Panc1 (cell line): ENCODE measurements at regions of chr7 and their contacts with region 1.

Region 1: GRCh38 chr7:98705626-98706025 is 88.5 kb downstream of the NPTX2 start:
- DNase-seq: no peak
- ATAC-seq: no peak
- H3K4me3 ChIP-seq: no peak overlapping the region
- H3K27ac ChIP-seq: no peak overlapping the region
- H3K4me1 ChIP-seq: no peaks in the 10 kb centered on the region
- H3K27me3 ChIP-seq: no peaks in the 10 kb centered on the region
- CTCF ChIP-seq: no peak

Region 2: GRCh38 chr7:98671733-98672331 is 33.8 kb before region 1 on chr7:
- CTCF ChIA-PET with region 1: no interaction called
- POLR2A ChIA-PET with region 1: interaction called, 10 read pairs
- in situ Hi-C with region 1: no loop called
- intact Hi-C with region 1: no loop called
- DNase-seq: no peak
- ATAC-seq: no peak
- H3K4me3 ChIP-seq: no peak overlapping the region
- H3K27ac ChIP-seq: no peak overlapping the region
- H3K4me1 ChIP-seq: no peaks in the 10 kb centered on the region
- H3K27me3 ChIP-seq: no peaks in the 10 kb centered on the region
- CTCF ChIP-seq: no peak